Ovary (tissue), 10 donors: ENCODE measurements at regions of chr6 and their contacts with region 1.

Region 1: GRCh38 chr6:155830531-155830930 is 374.9 kb upstream of the NOX3 start:
- DNase-seq: no peak
- H3K4me3 ChIP-seq: no peak overlapping the region
- H3K27ac ChIP-seq: no peak overlapping the region
- H3K4me1 ChIP-seq: no peaks in the 10 kb centered on the region
- H3K27me3 ChIP-seq: no peaks in the 10 kb centered on the region
- CTCF ChIP-seq: no peak
- EP300 ChIP-seq: no peak
- POLR2A ChIP-seq: no peak

Region 2: DNA sequence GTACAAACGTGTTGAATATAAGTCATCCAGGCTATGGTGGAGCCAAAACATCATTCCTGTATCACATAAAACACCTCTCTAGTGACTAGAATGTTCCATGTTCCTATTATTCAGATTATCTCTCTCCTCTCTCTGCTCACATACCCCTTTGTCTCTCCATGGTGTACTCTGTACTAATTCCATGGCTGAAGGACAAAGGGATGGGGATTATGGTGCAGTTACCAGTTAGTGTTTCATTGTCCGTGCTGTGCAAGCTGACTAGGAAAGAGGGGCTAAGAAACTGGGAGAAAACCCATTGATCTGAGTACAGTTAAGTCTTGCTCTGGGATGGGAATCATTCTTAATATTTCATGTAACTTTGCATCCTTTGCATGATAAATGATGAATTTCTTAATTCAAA is 22.5 kb after region 1 on chr6:
- intact Hi-C with region 1: loop called in 1 of 4 experiments (anchors 1 kb)
- DNase-seq: no peak
- H3K4me3 ChIP-seq: no peak overlapping the region
- H3K27ac ChIP-seq: no peak overlapping the region
- H3K4me1 ChIP-seq: no peaks in the 10 kb centered on the region
- H3K27me3 ChIP-seq: no peaks in the 10 kb centered on the region
- CTCF ChIP-seq: no peak
- EP300 ChIP-seq: no peak
- POLR2A ChIP-seq: no peak